CD8-positive, alpha-beta T cell (primary cell): ENCODE measurements at regions of chr1 and their contacts with region 1.

Region 1: DNA sequence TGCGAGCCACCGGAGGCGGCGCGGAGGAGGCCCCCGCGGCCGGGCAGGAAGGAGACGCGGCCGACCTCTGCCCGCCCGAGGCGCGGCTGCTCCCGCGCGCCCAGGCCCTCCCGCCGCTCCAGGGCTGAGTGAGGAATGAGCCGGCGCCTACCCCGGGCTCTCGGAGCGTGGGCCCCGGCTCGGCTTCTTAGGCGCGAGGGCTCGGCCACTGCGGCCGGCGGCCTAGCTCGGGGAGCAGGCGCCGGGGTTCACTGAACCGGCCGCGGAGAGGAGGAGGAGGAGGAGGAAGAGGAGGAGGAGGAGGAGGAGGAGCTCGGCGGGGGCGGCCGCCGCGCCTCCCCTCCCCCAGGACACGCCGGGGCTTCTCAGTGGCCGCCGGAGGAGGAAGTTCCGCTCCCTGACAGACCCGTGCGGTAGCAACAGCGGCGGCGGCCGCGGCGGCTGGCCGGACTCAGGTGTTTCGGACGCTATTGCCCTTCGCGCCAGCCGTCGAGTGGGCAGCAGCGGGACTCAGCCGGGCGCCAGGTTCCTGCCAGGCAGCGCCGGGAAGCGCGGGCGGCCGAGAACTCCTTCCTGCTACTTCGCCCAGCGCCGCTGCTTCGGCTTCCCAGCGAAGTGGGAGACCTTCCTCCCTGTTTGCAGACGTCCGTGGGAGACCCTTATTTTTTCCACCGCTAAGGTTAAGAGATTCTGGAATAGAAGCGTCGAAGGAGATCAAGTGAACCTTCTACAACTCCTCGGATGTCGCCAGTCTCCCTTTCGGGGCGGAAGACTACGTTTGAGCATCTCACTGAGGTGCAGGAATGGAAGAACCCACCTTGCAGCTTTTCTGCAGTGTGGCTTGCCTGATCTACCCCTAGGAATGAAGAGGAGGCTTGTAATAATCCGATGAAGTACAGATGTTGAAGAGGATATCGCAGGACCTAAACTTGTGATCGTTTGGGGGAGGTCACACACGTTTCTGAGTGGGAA is at the start of gene MAN1A2:
- DNase-seq: peak; percentile 31 to 87 (median 71)
- ATAC-seq: peak; percentile 61
- H3K4me3 ChIP-seq: peak within 1 kb of the TSS; percentile 57 to 84
- H3K4me3 Mint-ChIP-seq: peak within 1 kb of the TSS; percentile 95
- H3K27ac ChIP-seq: peak within 1 kb of the TSS; percentile 63 to 91
- H3K27ac Mint-ChIP-seq: peak within 1 kb of the TSS; percentile 97
- H3K4me1 ChIP-seq: peaks cover 52% of the 10 kb centered on the region
- H3K4me1 Mint-ChIP-seq: peaks cover 76% of the 10 kb centered on the region
- H3K27me3 ChIP-seq: no peaks in the 10 kb centered on the region
- H3K27me3 Mint-ChIP-seq: no peaks in the 10 kb centered on the region
- CTCF ChIP-seq: no peak
- total RNA-seq, gene MAN1A2: 46.5 to 49.3 TPM

Region 2: GRCh38 chr1:117137316-117137855 is 229.9 kb before region 1 on chr1:
- CTCF ChIA-PET with region 1: no interaction called
- POLR2A ChIA-PET with region 1: no interaction called
- intact Hi-C with region 1: no loop called
- DNase-seq: no peak
- ATAC-seq: no peak
- H3K4me3 ChIP-seq: no peak overlapping the region
- H3K4me3 Mint-ChIP-seq: no peak overlapping the region
- H3K27ac ChIP-seq: no peak overlapping the region
- H3K27ac Mint-ChIP-seq: no peak overlapping the region
- H3K4me1 ChIP-seq: no peaks in the 10 kb centered on the region
- H3K4me1 Mint-ChIP-seq: no peaks in the 10 kb centered on the region
- H3K27me3 ChIP-seq: no peaks in the 10 kb centered on the region
- H3K27me3 Mint-ChIP-seq: peaks cover 25% of the 10 kb centered on the region
- CTCF ChIP-seq: no peak

Region 3: DNA sequence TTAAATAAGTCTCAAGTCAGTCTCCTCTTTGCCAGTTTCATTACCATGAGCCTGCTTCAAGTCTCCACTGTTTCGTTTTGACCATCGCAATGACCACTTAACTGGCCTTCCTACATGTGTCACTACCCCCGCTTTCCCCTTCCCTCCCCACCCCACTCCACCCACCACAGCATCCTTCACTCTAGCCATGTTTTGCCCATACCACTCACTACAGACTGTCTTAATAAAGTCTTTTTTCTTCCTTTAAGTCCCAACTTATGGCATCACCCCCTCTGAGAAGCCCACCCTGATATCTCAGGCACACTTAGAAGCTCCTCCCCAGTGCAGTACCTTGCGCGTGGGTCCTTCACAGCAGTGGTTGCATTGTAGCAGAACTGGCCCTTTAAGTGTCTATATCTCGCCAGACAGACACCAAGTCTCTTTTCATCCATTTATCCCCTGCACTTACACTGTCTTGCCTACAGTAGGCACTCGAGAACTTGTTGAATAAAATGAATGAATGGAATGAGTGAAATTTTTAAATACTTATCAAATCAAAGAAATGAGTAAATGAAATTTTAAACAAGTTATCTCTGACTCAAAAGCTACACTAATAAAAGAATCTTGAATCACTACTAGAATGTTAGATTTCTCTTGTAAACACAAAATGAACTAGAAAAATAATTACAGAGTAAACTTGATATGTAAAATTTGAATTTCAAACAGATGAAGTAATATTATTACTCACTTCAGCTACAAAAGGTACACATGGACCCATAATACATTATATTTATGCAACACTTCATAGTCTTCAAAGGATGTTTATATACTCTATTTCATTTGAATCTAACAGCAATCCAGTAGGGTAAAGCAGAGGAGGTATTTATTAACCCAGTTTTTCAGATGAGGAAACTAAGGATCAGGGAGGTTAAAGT is 54.9 kb before region 1 on chr1:
- CTCF ChIA-PET with region 1: no interaction called
- POLR2A ChIA-PET with region 1: interaction called, 3 read pairs
- intact Hi-C with region 1: loop called in 1 of 2 experiments (anchors 5 kb)
- DNase-seq: peak in 2 of 9 experiments; percentile 39 to 46
- ATAC-seq: peak; percentile 75
- H3K4me3 ChIP-seq: no peak overlapping the region
- H3K4me3 Mint-ChIP-seq: no peak overlapping the region
- H3K27ac ChIP-seq: no peak overlapping the region
- H3K27ac Mint-ChIP-seq: no peak overlapping the region
- H3K4me1 ChIP-seq: no peaks in the 10 kb centered on the region
- H3K4me1 Mint-ChIP-seq: no peaks in the 10 kb centered on the region
- H3K27me3 ChIP-seq: no peaks in the 10 kb centered on the region
- H3K27me3 Mint-ChIP-seq: no peaks in the 10 kb centered on the region
- CTCF ChIP-seq: peak; percentile 62

Region 4: GRCh38 chr1:117346206-117346928 is 21.0 kb before region 1 on chr1:
- CTCF ChIA-PET with region 1: no interaction called
- POLR2A ChIA-PET with region 1: interaction called, 15 read pairs
- intact Hi-C with region 1: loop called in 1 of 2 experiments (anchors 2 kb)
- DNase-seq: no peak
- ATAC-seq: no peak
- H3K4me3 ChIP-seq: no peak overlapping the region
- H3K4me3 Mint-ChIP-seq: no peak overlapping the region
- H3K27ac ChIP-seq: no peak overlapping the region
- H3K27ac Mint-ChIP-seq: no peak overlapping the region
- H3K4me1 ChIP-seq: no peaks in the 10 kb centered on the region
- H3K4me1 Mint-ChIP-seq: peaks cover 8% of the 10 kb centered on the region
- H3K27me3 ChIP-seq: no peaks in the 10 kb centered on the region
- H3K27me3 Mint-ChIP-seq: no peaks in the 10 kb centered on the region
- CTCF ChIP-seq: no peak

Region 5: DNA sequence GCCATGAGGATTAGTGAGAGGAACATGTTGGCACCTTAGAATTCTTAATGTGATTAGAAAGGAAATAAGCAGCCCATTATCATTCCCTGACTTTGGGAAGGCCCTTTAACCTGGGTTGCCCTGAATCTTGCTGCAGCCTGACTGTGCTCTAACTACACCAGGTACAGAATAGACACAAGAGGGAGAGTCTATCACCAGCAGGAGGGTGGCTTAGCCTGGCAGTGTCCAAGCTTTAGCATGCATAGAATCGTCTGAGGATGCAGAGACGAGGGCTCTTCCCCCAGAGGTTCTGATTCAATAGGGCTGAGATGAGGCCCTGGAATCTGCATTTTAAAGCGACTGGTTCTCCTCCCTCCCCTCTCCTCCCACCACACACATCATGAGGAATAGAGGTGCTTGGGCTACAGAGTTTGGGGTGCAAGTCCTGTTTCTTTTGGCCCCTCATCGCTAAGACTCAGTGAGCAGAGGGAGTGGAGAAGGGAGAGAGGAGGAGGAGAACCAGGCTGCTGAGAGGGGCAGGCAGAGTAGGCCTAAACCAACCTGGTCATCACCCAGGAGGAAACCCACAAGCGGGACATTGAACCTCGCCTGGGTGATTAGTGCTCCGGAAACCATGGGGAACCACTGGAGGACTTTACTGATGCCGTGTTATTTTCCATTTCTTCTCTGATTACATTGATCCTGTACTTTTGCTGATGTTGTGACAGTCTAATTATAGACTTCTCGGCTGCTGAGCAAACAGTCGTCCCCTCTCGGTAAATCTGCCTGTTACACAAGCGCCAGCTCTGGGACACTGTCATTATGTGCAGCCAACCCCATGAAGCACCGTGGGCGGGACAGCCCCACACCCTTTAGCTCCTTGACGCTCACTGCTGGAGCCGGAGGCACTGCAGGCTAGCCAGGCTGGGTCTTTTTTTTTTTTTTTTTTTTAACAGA is 232.2 kb after region 1 on chr1:
- CTCF ChIA-PET with region 1: no interaction called
- POLR2A ChIA-PET with region 1: no interaction called
- intact Hi-C with region 1: loop called in 1 of 2 experiments (anchors 5 kb)
- DNase-seq: no peak
- ATAC-seq: no peak
- H3K4me3 ChIP-seq: no peak overlapping the region
- H3K4me3 Mint-ChIP-seq: no peak overlapping the region
- H3K27ac ChIP-seq: no peak overlapping the region
- H3K27ac Mint-ChIP-seq: no peak overlapping the region
- H3K4me1 ChIP-seq: no peaks in the 10 kb centered on the region
- H3K4me1 Mint-ChIP-seq: no peaks in the 10 kb centered on the region
- H3K27me3 ChIP-seq: no peaks in the 10 kb centered on the region
- H3K27me3 Mint-ChIP-seq: no peaks in the 10 kb centered on the region
- CTCF ChIP-seq: no peak

Region 6: GRCh38 chr1:117929173-117929989 is 562.0 kb after region 1 on chr1 and contains the starts of genes GDAP2 and WDR3:
- CTCF ChIA-PET with region 1: no interaction called
- POLR2A ChIA-PET with region 1: interaction called, 4 read pairs
- intact Hi-C with region 1: loop called (anchors 5 to 10 kb)
- DNase-seq: peak; percentile 90 to 98 (median 95)
- ATAC-seq: peak; percentile 90
- H3K4me3 ChIP-seq: peak within 1 kb of the TSS; percentile 83 to 89
- H3K4me3 Mint-ChIP-seq: peak within 1 kb of the TSS; percentile 94
- H3K27ac ChIP-seq: peak within 1 kb of the TSS; percentile 83 to 94
- H3K27ac Mint-ChIP-seq: peak within 1 kb of the TSS; percentile 97
- H3K4me1 ChIP-seq: peaks cover 37% of the 10 kb centered on the region
- H3K4me1 Mint-ChIP-seq: peaks cover 63% of the 10 kb centered on the region
- H3K27me3 ChIP-seq: no peaks in the 10 kb centered on the region
- H3K27me3 Mint-ChIP-seq: no peaks in the 10 kb centered on the region
- CTCF ChIP-seq: no peak
- total RNA-seq, gene GDAP2: 24.9 to 28.0 TPM
- total RNA-seq, gene WDR3: 5.7 to 6.1 TPM

Region 7: DNA sequence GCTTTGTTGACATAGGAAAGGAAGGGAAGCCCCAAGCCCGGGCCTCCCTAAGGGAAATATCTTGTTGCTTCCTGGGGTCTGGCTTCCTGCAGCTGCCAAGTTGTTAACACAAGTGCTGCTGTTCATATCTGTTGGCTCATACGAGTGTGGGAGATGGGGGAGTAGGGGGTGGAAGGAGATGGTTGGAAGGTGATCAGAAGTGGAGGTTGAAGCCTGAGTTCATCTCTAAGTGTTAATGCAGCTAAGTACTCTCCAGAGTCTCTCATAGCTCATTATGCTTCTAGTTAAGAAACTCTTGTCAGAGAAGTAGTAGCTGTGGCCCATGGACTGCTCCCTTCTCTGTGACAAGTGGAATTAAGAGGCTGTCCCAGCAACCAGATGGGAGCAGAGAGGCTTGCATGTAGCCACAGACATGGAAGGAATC is 1136.9 kb after region 1 on chr1:
- CTCF ChIA-PET with region 1: no interaction called
- POLR2A ChIA-PET with region 1: no interaction called
- intact Hi-C with region 1: no loop called
- DNase-seq: no peak
- ATAC-seq: no peak
- H3K4me3 ChIP-seq: no peak overlapping the region
- H3K4me3 Mint-ChIP-seq: no peak overlapping the region
- H3K27ac ChIP-seq: no peak overlapping the region
- H3K27ac Mint-ChIP-seq: no peak overlapping the region
- H3K4me1 ChIP-seq: no peaks in the 10 kb centered on the region
- H3K4me1 Mint-ChIP-seq: no peaks in the 10 kb centered on the region
- H3K27me3 ChIP-seq: no peaks in the 10 kb centered on the region
- H3K27me3 Mint-ChIP-seq: peaks cover 2% of the 10 kb centered on the region
- CTCF ChIP-seq: no peak